ENCODE measurements at regions of chr16 and their contacts with region 1.

Region 1: DNA sequence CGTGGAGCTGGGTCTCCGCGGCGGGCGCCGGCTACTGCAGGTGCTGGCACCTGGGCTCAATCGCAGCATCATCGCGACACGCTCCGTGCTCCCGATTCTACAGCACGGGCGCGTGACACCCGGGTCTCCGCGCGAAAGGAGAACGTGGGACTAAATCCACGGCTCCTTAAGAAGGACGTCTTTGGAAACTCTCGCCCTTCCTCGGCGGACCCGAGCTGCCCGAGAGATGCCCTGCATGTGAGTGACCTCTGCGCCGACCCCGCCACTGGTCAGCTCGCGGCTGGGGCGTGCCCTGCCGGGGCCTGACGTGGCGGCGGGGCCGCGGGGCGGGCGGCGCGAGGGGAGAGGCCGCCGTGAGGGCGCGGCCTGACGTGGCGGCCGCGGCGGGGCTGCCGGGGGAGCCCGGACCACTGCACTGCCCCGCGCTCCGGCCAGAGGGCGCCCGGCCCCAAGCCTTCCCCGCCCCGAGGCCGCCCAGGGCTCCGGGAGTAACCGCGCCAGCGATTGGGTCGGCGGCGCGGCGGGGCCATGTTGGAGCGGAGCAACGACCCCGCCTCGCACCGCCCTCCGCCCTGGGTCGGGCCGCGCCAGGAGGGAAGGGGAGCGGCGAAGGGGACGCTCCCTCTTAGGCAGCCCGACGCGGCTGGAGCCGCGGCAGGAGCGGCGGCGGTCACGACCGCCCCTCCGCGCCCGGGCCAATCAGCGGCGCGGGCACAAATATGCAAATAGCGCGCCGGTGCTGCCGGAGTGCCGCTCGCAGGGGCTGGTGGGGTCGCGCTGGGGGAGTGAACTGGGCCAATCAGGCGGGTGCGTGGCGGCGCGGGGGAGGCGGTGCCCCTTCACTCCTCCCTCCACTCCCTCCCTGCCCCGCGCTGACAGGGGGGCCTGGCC is 75.6 kb downstream of the CHD9 start:
- DNase-seq: peak; percentile 77
- H3K4me3 ChIP-seq: peak overlapping the region; percentile 80 to 95 (median 86)
- H3K27ac ChIP-seq: peak overlapping the region; percentile 93 to 97 (median 96)
- H3K4me1 ChIP-seq: peaks cover 0 to 35% (median 5%) of the 10 kb centered on the region in 3 donors
- H3K27me3 ChIP-seq: no peaks in the 10 kb centered on the region
- CTCF ChIP-seq: peak; percentile 28 to 85 (median 76)
- POLR2A ChIP-seq: peak in 2 of 4 donors; percentile 72

Region 2: GRCh38 chr16:53054670-53055485 is 75.5 kb before region 1 on chr16 and contains the start of gene CHD9:
- intact Hi-C with region 1: loop called (anchors 10 kb)
- DNase-seq: no peak
- H3K4me3 ChIP-seq: peak within 1 kb of the TSS; percentile 72 to 92 (median 82)
- H3K27ac ChIP-seq: peak within 1 kb of the TSS; percentile 92 to 95 (median 94)
- H3K4me1 ChIP-seq: peaks cover 13 to 71% (median 20%) of the 10 kb centered on the region in 3 donors
- H3K27me3 ChIP-seq: no peaks in the 10 kb centered on the region
- CTCF ChIP-seq: peak; percentile 99 to 100 (median 99)
- POLR2A ChIP-seq: peak in 1 of 4 donors; percentile 11
- total RNA-seq, gene CHD9: 29.0 to 68.5 (median 37.3) TPM

Measured in esophagus squamous epithelium (tissue), 5 donors.